ENCODE measurements at regions of chr17 and their contacts with region 1.

Region 1: DNA sequence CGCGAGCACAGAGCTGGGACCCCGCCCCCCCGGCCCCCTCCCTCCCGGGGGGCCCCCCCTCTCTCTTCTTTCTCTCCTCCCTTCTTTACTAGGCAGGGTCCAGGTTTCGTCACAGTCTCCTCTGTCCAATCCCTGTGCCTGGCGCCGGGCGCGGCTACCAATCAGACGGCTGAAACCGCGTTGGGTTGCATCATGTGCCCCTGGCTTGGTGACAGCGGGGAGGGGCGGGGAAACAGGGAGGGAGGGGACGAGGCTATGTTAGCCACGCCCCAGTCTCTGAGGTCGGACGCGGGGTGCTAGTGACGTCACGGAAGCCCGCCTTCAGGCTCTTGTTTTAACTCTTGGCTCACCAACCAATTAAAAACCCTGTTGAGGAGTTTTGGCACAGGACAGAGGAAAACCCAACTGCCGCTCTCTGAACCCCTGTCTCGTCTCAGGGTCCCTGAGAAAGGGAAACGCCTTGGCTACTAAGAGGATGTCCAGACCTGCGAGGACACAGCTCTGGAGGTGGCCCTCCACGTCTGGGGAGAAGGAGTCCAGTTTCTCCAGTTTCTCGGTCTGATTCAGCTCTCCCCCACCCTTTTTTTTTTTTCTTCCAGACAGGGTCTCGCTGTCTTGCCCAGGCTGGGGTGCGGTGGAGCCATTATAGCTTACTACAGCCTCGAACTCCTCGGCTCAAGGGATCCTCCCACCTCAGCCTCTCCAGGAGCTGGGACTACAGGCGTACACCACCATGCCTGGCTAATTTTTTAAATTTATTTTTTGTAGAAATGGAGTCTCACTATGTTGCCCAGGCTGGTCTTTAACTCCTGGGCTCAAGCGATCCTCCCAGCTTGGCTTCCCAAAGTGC is 439 bp upstream of the PLEKHH3 start:
- DNase-seq: peak; percentile 99
- H3K4me3 Mint-ChIP-seq: peak overlapping the region; percentile 81
- H3K27ac Mint-ChIP-seq: peak overlapping the region; percentile 79
- H3K4me1 Mint-ChIP-seq: peaks cover 46% of the 10 kb centered on the region
- H3K27me3 Mint-ChIP-seq: peaks cover 38% of the 10 kb centered on the region

Region 2: DNA sequence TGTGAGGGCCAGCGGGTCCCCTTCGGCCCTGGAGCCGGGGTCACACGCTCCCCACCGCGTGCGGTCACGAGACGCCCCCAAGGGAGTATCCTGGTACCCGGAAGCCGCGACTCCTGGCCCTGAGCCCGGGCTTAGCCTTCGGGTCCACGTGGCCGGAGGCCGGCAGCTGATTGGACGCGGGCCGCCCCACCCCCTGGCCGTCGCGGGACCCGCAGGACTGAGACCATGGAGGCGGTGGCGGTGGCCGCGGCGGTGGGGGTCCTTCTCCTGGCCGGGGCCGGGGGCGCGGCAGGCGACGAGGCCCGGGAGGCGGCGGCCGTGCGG is 141.2 kb before region 1 on chr17 and contains the start of gene NAGLU:
- intact Hi-C with region 1: loop called (anchors 1 kb)
- DNase-seq: peak; percentile 96
- H3K4me3 Mint-ChIP-seq: peak within 1 kb of the TSS; percentile 91
- H3K27ac Mint-ChIP-seq: peak within 1 kb of the TSS; percentile 84
- H3K4me1 Mint-ChIP-seq: peaks cover 34% of the 10 kb centered on the region
- H3K27me3 Mint-ChIP-seq: peaks cover 10% of the 10 kb centered on the region
- total RNA-seq, gene NAGLU: 20.4 and 20.7 TPM in 2 replicates

Region 3: DNA sequence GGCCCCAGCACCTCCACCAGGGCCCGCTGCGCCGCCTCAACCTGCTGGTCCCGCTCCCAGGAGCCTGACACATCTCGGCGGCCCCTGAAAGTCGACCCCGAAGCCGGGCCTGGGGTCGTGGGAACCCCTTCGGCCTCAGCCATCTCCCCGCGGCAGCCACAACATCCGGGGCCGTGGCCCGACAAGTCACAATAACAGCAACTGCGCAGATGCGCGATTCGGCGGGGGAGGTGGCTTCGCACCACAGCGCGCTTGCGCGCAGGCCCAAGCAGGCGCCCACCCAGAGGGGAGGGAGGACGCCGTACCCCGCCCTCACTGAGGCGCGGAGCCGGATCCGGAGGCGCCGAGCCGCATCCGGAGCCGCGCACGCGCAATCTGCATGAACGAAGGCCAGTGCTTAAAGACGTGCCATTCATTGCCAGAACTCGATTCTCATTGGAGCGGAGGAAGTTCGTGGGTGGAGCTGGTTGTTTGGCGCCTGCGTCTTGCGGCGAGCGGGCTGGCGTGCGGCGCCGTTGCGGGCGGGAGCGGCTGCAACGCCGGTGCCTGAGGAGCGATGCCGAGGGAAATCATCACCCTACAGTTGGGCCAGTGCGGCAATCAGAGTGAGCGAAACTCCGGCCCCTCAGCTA is 67.9 kb before region 1 on chr17 and contains the starts of genes RETREG3 and TUBG1:
- intact Hi-C with region 1: loop called (anchors 1 kb)
- DNase-seq: peak; percentile 100
- H3K4me3 Mint-ChIP-seq: peak within 1 kb of the TSS; percentile 99
- H3K27ac Mint-ChIP-seq: peak within 1 kb of the TSS; percentile 94
- H3K4me1 Mint-ChIP-seq: peaks cover 30% of the 10 kb centered on the region
- H3K27me3 Mint-ChIP-seq: no peaks in the 10 kb centered on the region
- total RNA-seq, gene RETREG3: 35.8 and 38.3 TPM in 2 replicates
- total RNA-seq, gene TUBG1: 99.9 and 100 TPM in 2 replicates

Region 4: DNA sequence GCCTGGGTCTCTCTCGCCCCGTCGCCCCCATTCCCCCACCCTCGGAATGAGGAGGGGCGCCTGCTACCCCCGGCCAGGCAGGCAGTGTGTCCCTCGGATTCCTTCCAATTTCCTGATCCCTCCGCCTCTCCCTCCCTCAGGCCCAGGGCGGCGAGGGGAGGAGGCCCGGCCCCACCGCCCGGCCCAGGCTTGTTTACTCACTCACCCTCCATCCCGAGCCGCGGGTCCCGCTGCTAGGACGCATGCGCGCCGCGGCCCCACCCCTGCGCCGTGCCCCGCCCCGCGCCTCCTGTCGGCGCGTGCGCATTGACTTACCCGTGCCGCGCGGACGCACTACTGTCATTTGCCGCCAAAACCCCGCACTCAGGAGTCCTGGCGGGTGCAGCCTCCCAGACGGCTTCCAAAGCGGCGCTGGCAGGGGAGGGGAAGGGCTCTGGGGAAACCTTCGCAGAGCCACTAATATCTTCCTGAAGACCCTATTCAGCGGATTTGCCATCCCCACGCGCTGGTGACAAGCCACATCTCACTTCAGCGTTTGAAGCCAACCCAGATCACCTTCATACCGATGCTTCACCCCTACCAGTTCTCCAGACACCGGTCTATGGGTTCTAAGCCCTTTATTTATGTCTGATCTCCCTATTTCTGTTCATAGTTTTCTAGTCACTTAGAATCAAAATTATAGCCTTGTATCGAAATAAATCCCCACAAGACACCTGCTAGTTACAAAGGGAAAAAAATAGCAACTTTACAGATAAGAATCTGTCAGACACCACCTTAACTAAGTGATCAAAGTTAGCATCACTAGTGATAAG is 67.8 kb after region 1 on chr17 and contains the start of gene EZH1:
- intact Hi-C with region 1: loop called (anchors 2 kb)
- DNase-seq: peak; percentile 98
- H3K4me3 Mint-ChIP-seq: peak within 1 kb of the TSS; percentile 98
- H3K27ac Mint-ChIP-seq: peak within 1 kb of the TSS; percentile 97
- H3K4me1 Mint-ChIP-seq: peaks cover 17% of the 10 kb centered on the region
- H3K27me3 Mint-ChIP-seq: peaks cover 30% of the 10 kb centered on the region
- total RNA-seq, gene EZH1: 39.5 and 39.6 TPM in 2 replicates

Measured in activated CD4-positive, alpha-beta T cell treated with anti-CD3 and anti-CD28 coated beads, Interleukin-2, amount 10 ng/mL, durations not matched to agents 24 days and 14 days (primary cell).